Left colon (tissue), 2 donors: ENCODE measurements at regions of chr6 and their contacts with region 1.

Region 1: DNA sequence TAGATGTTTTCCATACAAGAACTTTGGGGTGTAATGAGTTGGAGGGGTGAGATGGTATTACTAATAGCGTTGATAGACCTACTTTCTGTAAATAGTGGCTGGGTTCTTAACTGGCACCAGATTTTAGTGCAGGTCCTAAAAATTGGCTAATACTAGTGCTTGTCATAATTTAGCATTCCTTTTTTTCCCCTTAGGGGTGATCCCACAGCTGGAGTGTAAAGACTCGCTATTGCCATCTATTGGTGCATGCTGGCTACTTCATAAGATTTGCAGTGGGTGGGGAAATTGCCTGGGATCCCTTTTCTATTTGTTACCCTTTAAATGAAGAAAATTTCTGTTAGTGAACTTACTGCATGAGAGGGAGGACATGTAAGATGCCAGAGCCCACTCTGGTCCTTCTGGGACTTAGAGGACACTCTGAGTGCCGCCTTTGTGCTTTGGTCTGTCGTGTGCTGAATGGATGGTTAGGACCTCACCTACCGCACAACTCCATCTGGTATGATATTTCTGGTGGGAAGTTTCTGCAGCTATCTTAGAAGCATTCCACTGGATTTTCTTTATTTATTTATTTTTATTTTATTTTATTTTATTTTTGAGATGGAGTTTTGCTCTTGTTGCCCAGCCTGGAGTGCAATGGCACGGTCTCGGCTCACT is 195.5 kb downstream of the JARID2 start:
- DNase-seq: peak in 1 of 2 donors; percentile 27
- ATAC-seq: peak; percentile 68

Region 2: DNA sequence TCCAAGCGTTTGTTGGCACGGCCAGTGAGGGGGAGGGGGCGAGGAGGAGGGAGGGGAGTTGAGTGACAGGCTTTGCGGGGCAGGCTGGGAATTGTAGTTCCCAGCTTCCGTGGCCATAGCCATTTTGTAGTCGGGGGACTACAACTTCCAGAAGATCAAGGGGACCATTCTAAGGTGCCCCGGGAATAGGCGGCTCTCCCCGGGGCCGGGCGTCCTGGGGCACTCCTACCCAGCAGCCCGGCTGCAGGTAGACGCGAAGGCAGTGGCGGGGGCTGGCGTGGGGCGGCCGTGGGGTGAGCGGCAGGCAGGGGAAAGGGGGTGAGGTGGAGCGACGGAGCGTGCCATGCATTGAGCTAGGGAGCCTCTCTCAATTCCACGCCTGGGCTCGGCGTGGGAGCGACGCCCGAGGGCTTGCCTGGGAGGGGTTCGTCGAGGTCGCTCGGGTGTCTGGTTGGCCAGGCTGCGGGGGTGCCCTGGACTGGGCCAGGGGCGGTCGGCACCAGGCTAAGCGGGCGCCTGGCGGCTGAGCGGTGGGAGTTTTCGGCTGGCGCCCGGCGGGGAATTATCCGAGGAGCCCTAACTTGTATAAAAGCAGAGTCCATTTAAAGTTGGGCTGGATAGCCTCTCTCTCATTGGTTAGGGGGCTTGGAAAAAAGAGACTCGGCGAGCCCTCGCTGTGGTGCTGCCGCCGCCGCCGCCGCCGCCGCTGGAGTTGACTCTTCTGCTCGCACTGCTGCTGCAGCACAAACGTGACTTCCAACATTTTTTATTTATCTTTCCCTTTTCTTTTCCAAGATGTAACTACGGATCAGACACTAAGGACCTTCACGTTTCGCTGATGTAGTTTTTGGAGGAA is 195.8 kb before region 1 on chr6 and contains the start of gene JARID2:
- intact Hi-C with region 1: loop called in 1 of 2 experiments (anchors 5 kb)
- DNase-seq: peak; percentile 99
- ATAC-seq: peak; percentile 79
- total RNA-seq, gene JARID2: 10.0 to 11.2 TPM